H1 (cell line): ENCODE measurements at regions of chr14 and their contacts with region 1.

Region 1: GRCh38 chr14:103808403-103809001 is 38.9 kb downstream of the PPP1R13B start:
- DNase-seq: peak; percentile 27 to 82
- H3K4me3 ChIP-seq: no peak overlapping the region
- H3K27ac ChIP-seq: no peak overlapping the region
- H3K4me1 ChIP-seq: no peaks in the 10 kb centered on the region
- H3K27me3 ChIP-seq: no peaks in the 10 kb centered on the region
- CTCF ChIP-seq: peak; percentile 74 to 88 (median 77)
- EP300 ChIP-seq: no peak
- POLR2A ChIP-seq: no peak
- RAD21 ChIP-seq: peak; percentile 94 to 95

Region 2: DNA sequence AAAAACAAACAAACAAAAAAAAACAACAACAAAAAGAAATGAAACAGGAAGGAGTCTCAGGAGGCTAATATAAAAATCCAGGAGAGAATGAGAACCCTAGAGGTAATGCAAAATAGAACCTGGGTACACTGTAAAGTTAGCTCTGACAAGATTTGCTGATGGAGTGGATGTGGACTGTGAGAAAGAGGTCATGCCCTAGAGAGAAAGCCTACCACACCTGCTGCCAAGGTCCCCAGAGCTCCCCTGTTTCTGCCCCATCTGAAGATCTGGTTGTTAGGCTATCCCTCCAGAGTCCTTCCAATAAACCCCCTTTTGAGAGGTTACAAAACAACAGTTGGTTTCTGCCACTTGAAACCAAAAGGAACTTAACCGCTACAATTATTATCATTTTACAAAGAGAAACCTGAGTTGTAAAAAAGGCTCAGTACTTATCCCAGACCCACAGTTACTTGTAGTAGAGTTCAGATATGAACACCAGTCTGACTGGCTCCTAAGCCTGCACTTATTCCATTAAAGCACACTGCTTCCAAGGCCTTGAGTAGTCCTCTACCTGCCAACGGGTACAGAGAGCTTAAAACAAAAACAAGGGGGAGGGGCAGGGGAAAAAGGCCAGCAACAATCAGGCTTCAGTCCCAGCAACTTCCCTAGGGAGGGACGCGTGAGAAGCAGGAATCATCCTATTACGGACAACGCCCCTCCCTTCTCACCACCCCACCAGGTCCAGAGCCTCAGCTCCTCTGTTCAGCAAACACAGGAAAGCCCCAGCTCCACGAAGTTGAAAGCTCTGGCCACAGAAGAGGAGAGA is 11.2 kb after region 1 on chr14:
- CTCF ChIA-PET with region 1: interaction called, 19 read pairs
- POLR2A ChIA-PET with region 1: interaction called, 3 read pairs
- DNase-seq: peak; percentile 27 to 52
- H3K4me3 ChIP-seq: peak overlapping the region in 1 of 4 experiments; percentile 36; a peak in 2 of 8 replicates
- H3K27ac ChIP-seq: no peak overlapping the region
- H3K4me1 ChIP-seq: peaks cover 0 to 5% (median under 1%) of the 10 kb centered on the region in 4 experiments; a peak in 4 of 7 replicates
- H3K27me3 ChIP-seq: no peaks in the 10 kb centered on the region
- CTCF ChIP-seq: no peak
- EP300 ChIP-seq: no peak
- POLR2A ChIP-seq: no peak
- RAD21 ChIP-seq: no peak; a peak in 1 of 4 replicates

Region 3: DNA sequence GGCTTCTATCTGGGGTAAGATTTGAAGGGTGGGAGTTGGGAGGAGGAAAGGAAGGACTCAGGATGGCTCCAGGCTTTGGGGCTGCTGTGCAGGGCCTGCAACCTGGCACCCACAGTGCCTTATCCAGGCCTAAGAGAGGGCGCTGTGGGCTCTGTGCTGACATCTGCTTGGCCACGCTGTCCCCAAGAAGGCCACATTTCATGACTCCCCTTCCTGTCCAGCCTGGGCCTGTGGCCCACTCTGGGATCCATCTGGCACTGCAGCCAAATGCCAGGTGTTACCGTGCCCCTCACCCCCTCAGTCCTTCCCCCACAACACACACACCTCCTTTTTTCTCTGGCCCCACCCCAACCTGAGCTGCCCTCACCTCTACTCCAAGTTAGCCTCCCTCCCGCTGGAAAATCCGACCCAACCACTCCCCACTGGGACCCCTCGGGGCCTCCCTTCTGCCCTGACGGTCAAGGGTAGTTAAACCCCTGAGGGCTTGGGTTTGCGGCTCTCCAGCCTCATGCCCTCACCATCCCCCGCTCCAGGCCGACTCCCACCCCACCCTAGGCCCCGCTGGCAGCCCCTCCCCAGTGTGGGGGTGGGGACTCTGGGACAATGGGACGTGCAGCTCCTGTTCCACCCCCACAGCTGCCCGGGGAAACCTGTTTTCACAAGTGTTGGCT is 46.7 kb after region 1 on chr14:
- CTCF ChIA-PET with region 1: interaction called, 14 read pairs
- POLR2A ChIA-PET with region 1: interaction called, 4 read pairs
- DNase-seq: peak in 1 of 2 experiments; percentile 78
- H3K4me3 ChIP-seq: peak overlapping the region in 2 of 4 experiments; percentile 10 to 45; a peak in 4 of 8 replicates
- H3K27ac ChIP-seq: no peak overlapping the region
- H3K4me1 ChIP-seq: peaks cover 0 to 25% (median 21%) of the 10 kb centered on the region in 4 experiments; a peak in 6 of 7 replicates
- H3K27me3 ChIP-seq: no peaks in the 10 kb centered on the region
- CTCF ChIP-seq: peak in 1 of 3 experiments; percentile 14; a peak in 1 of 4 replicates
- EP300 ChIP-seq: no peak
- POLR2A ChIP-seq: no peak
- RAD21 ChIP-seq: no peak

Region 4: DNA sequence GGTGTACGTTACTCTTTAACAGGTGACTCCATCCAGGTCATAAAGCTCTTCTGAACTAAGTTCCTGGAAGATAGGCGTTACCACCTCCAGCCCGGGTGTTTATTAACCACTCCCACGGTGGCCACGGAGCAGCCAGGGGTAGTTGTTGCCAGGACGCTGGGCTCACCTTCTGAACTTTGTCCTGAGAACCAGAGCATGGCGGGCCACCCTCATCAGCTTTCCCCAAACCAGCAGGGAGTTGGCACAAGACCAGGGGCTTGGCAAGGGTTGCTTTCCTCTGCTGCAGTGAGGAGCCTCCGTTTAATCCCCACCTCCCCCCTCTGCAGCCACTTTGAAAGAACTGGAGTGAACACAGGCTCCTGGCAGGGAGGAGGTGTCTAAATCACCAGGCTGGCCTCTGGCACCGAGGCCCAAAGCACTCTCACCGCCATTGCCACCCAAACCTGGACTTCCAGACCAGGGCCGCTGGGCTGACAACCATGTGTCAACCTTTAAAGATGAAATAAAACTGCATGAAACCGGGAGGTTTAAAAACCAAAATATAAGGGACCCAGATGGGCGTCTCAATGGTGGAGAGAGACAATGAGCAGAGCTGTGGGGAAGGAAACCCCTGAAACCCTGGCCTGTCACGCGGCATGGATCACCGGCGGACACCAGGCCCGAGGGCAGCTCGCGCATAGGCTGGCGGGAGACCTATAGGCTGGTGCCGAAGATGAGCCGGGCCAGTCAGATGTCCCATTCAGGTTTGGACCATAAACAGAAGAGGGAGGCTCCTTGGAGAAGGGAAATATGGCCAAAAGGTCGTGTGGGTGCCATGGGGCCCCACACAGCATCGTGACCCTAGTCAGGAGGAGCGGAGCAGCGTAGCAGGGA is 88.8 kb after region 1 on chr14:
- CTCF ChIA-PET with region 1: interaction called, 54 read pairs
- POLR2A ChIA-PET with region 1: no interaction called
- DNase-seq: no peak
- H3K4me3 ChIP-seq: no peak overlapping the region
- H3K27ac ChIP-seq: no peak overlapping the region
- H3K4me1 ChIP-seq: no peaks in the 10 kb centered on the region
- H3K27me3 ChIP-seq: no peaks in the 10 kb centered on the region
- CTCF ChIP-seq: no peak
- EP300 ChIP-seq: no peak
- POLR2A ChIP-seq: no peak
- RAD21 ChIP-seq: no peak

Region 5: DNA sequence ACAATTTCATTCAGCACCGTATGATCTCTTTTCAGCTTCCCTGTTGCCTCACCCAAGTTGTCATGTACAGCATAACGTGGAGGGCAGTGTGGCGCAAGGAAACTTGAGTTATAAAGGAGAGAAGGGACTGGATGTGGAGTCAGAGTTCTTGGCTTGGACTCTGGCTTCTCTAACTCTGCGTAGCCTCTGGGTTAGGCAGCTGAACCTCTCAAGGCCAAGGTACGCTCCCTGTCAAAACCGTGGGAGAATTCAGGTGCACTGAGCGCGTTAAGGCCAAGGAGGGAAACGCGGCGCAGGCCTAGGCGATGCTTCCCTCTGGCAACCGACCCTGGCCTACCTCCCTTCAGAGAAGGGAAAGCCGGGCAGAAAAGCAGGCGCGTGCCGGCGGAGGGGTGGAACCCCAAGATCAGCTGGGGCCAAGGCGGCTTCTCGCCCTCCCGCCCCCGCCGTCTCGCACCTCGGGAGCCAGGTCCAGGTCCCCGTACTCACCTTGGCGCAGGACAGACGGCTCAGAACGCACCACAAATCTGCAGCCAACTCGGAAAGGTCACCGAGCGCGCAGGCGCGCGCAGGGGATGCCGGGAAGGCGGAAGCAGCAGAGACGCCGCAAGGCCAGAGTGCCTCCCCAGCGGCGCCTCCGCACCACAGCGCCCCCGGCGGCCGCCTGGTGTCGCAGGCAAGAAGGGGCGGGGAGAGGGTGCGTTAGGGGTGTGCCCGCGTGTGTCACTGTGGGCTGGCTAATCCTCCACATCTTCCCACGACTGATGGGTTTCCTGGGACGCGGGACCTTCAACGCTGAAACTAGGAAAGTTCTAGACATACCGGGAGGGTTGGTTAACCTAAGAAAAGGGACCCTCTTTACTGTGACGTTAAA is 112.7 kb after region 1 on chr14:
- CTCF ChIA-PET with region 1: interaction called, 47 read pairs
- POLR2A ChIA-PET with region 1: no interaction called
- DNase-seq: peak; percentile 74 to 96
- H3K4me3 ChIP-seq: peak overlapping the region; percentile 86 to 98 (median 94)
- H3K27ac ChIP-seq: peak overlapping the region; percentile 67
- H3K4me1 ChIP-seq: 0 out of 7 replicates have a peak, but pooled peaks cover 0 to 4% (median 0%) of the 10 kb centered on the region in 4 experiments
- H3K27me3 ChIP-seq: no peaks in the 10 kb centered on the region
- CTCF ChIP-seq: peak; percentile 96 to 97 (median 96)
- EP300 ChIP-seq: no peak
- POLR2A ChIP-seq: peak in 1 of 2 experiments; percentile 87; a peak in 2 of 3 replicates
- RAD21 ChIP-seq: peak; percentile 28 to 46; a peak in 3 of 4 replicates

Region 6: GRCh38 chr14:103973354-103973753 is 164.9 kb after region 1 on chr14:
- CTCF ChIA-PET with region 1: interaction called, 43 read pairs
- POLR2A ChIA-PET with region 1: no interaction called
- DNase-seq: no peak
- H3K4me3 ChIP-seq: no peak overlapping the region
- H3K27ac ChIP-seq: no peak overlapping the region
- H3K4me1 ChIP-seq: no peaks in the 10 kb centered on the region
- H3K27me3 ChIP-seq: no peaks in the 10 kb centered on the region
- CTCF ChIP-seq: no peak
- EP300 ChIP-seq: no peak
- POLR2A ChIP-seq: no peak
- RAD21 ChIP-seq: no peak